Adrenal gland (tissue), 19 donors: ENCODE measurements at regions of chr6 and their contacts with region 1.

Region 1: GRCh38 chr6:34386316-34387137 is 5.9 kb downstream of the NUDT3 start:
- DNase-seq: peak in 2 of 7 donors; percentile 26 to 44
- H3K4me3 ChIP-seq: no peak overlapping the region
- H3K27ac ChIP-seq: peak overlapping the region in 2 of 5 donors; percentile 5 to 26
- H3K4me1 ChIP-seq: peaks cover 20 to 65% of the 10 kb centered on the region in 2 donors
- H3K27me3 ChIP-seq: no peaks in the 10 kb centered on the region
- CTCF ChIP-seq: no peak
- POLR2A ChIP-seq: no peak

Region 2: GRCh38 chr6:34332251-34333198 is 54.0 kb before region 1 on chr6:
- intact Hi-C with region 1: loop called in 1 of 2 experiments (anchors 10 kb)
- DNase-seq: no peak
- H3K4me3 ChIP-seq: no peak overlapping the region
- H3K27ac ChIP-seq: no peak overlapping the region
- H3K4me1 ChIP-seq: peaks cover 10 to 32% of the 10 kb centered on the region in 2 donors
- H3K27me3 ChIP-seq: no peaks in the 10 kb centered on the region
- CTCF ChIP-seq: no peak
- POLR2A ChIP-seq: no peak

Region 3: DNA sequence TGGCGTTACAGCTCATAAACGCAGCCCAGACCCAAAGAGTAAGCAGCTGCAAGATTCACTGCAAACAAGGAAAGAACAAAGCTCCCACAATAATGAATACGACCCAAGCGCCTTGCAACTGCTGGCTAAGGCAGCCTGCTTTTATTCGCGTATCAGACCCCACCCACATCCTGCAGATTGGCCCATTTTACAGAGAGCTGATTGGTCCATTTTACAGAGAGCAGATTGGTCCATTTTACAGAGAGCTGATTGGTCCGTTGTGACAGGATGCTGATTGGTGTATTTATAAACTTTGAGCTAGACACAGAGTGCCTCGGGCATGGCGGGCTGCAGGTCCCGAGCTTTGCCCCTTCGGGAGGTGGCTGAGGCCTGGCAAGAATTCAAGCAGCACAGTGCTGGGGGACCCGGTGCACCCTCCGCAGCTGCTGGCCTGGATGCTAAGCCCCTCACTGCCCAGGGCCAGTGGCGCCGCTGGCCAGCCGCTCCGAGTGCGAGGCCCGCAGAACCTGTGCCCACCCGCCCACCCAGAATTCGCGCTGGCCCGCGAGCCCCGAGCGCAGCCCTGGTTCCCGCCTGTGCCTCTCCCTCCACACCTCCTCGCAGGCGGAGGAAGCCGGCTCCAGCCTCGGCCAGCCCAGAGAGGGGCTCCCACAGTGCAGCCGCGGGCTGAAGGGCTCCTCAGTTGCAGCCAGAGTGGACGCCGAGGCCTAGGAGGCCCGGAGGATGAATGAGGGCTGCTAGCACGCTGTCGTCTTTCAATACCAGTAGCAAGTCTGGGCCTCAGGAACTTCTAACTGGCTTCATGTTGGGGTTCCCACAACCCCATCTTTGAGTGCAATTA is 50.5 kb after region 1 on chr6:
- intact Hi-C with region 1: no loop called
- DNase-seq: no peak
- H3K4me3 ChIP-seq: no peak overlapping the region
- H3K27ac ChIP-seq: no peak overlapping the region
- H3K4me1 ChIP-seq: no peaks in the 10 kb centered on the region
- H3K27me3 ChIP-seq: no peaks in the 10 kb centered on the region
- CTCF ChIP-seq: no peak
- POLR2A ChIP-seq: no peak